GM10248 (cell line): ENCODE measurements at regions of chr6 and their contacts with region 1.

Region 1: GRCh38 chr6:35165630-35166071 is 24.5 kb upstream of the TCP11 start:
- DNase-seq: peak; percentile 36
- CTCF ChIP-seq: no peak

Region 2: GRCh38 chr6:35146453-35146852 is 19.2 kb before region 1 on chr6:
- CTCF ChIA-PET with region 1: interaction called, 10 read pairs
- POLR2A ChIA-PET with region 1: no interaction called
- DNase-seq: no peak
- CTCF ChIP-seq: peak; percentile 34